ENCODE measurements at regions of chrX and their contacts with region 1.

Region 1: GRCh38 chrX:45322382-45322781 is 121.7 kb upstream of the DIPK2B start:
- DNase-seq: peak in 1 of 2 donors; percentile 26
- ATAC-seq: no peak
- H3K4me3 ChIP-seq: no peak overlapping the region
- H3K4me3 Mint-ChIP-seq: no peak overlapping the region
- H3K27ac ChIP-seq: no peak overlapping the region
- H3K27ac Mint-ChIP-seq: no peak overlapping the region
- H3K4me1 ChIP-seq: no peaks in the 10 kb centered on the region
- H3K4me1 Mint-ChIP-seq: no peaks in the 10 kb centered on the region
- H3K27me3 ChIP-seq: no peaks in the 10 kb centered on the region
- H3K27me3 Mint-ChIP-seq: peaks cover 9 to 25% of the 10 kb centered on the region in 2 donors
- CTCF ChIP-seq: no peak

Region 2: DNA sequence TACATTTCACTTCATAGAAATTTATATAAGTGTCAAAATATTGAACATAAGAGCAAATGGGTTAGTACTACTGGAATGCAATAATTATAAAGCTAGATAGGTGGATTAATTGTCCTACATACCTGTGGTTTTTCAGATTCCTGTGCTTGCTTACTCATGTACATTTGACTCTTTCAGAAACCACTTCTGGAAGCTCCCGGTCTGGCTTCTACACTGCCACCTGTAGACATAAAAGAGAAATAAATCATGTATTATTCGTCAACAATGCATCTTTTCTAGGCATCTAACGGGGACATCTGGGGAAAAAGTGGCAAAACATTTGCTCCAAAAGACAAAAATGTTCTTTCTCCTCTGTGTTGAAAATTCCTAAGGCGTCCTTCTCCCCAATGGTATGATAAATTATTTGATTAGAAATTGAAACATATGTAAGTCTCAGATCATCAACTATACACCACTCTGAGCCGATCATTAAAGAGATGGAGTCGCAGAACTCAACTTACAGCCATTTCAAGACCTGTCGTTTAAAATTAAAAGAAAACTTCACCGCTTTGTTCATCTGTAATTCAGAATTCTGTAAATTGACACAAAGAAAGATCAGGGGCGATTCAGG is 527.0 kb after region 1 on chrX:
- intact Hi-C with region 1: loop called (anchors 10 kb)
- DNase-seq: peak in 1 of 2 donors; percentile 64
- ATAC-seq: peak in 2 of 3 donors; percentile 36 to 38
- H3K4me3 ChIP-seq: no peak overlapping the region
- H3K4me3 Mint-ChIP-seq: peak overlapping the region; percentile 89
- H3K27ac ChIP-seq: no peak overlapping the region
- H3K27ac Mint-ChIP-seq: no peak overlapping the region
- H3K4me1 ChIP-seq: peaks cover 14% of the 10 kb centered on the region
- H3K4me1 Mint-ChIP-seq: peaks cover 16% of the 10 kb centered on the region in 2 donors
- H3K27me3 ChIP-seq: peaks cover 2% of the 10 kb centered on the region
- H3K27me3 Mint-ChIP-seq: peaks cover 9 to 35% of the 10 kb centered on the region in 2 donors
- CTCF ChIP-seq: peak; percentile 11

Measured in natural killer cell (primary cell).